Mammary epithelial cell (primary cell): ENCODE measurements at regions of chr3 and their contacts with region 1.

Region 1: DNA sequence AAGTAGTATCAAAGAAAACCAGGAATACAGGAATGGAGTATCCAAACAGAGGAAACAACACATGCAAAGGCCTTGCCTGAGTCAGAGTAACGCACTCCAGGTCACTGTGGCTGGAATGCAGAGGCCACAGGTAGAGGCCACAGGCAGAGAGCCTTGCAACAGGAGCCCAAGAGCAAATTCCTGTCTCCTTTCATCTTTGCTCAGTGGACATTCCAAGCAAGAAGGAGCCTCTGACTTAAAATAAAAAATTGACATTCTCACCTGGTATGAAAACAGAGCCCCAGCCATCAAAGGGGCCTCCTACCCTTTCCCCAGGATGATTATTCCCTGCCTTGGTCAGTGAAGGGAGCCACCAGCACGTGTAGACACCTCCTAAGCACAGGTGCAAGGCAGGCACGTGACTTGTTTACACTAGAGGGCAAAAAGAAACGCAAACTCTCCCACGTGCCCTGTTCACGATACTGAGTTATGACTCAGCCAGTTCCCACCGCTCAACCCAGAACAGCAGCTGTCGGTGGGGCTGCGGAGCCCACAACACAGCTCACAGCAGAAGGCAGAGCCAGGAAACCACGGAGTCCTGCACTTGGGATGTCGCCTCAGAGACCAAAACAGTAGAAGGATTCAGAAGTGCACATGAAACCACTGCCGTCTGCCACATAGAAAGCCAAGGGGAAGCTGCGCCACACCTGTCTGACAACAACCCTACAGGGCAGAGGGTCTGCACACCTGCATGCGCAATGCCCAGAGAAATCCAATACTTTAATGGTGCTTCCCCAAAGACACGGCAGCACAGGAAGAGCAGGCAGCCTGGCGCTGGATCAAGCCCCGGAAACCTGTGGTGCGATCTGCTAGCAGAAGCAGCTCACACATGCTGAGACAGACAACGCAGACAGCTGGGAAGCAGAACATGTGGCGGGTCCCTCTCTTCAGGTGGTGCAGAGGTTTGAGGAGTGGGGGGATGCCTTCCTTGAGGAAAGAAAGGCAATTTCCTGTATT is 52.1 kb downstream of the ITGB5 start:
- DNase-seq: peak; percentile 79
- H3K4me3 ChIP-seq: no peak overlapping the region
- H3K27ac ChIP-seq: peak overlapping the region; percentile 16
- H3K4me1 ChIP-seq: peaks cover 50% of the 10 kb centered on the region
- H3K27me3 ChIP-seq: no peaks in the 10 kb centered on the region
- CTCF ChIP-seq: no peak

Region 2: GRCh38 chr3:124878561-124879336 is 43.7 kb after region 1 on chr3:
- CTCF ChIA-PET with region 1: no interaction called
- dilution Hi-C with region 1: loop called (anchors 5 kb)
- in situ Hi-C with region 1: no loop called
- intact Hi-C with region 1: no loop called
- DNase-seq: peak; percentile 94
- H3K4me3 ChIP-seq: peak overlapping the region in 1 of 3 experiments; percentile 5
- H3K27ac ChIP-seq: peak overlapping the region; percentile 68
- H3K4me1 ChIP-seq: peaks cover 60% of the 10 kb centered on the region
- H3K27me3 ChIP-seq: no peaks in the 10 kb centered on the region
- CTCF ChIP-seq: no peak

Region 3: DNA sequence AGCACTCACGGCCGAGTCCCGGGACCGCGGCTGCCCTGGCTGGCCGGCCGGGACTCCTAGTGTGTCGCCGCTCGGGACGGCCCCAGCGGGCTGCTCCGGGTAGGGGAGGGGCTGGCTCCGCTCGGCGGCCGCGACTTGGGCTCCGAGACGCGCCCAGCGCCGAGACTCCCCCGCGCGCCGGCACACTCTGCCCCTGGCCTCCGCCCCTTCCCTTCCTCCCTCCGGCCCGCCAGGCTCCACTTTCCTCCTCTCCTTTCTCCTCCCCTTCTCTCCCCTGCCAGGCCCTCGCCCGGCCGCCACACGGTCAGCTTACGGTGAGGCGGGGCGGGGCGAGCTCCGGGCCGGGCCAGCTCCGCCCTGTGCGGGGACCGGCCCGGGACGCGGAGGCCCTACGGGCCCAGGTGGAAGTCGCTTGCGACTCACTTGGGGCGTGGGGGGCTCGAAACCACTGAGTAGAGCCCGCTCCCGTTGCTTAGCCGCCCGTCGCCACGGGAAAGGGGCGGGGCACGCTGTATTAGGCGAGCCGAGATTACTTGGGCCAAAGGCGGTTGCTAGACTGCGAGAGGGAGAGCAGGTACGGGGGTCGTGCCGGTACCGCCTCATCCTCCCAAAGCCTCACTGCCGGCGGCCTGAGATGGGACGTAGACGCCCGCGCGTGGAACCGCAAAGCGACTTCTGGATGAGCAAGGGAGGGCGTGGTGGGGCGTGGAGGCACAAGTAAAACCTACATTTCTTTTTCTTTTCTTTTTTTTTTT is 52.3 kb after region 1 on chr3 and contains the start of gene ITGB5:
- CTCF ChIA-PET with region 1: no interaction called
- dilution Hi-C with region 1: no loop called
- in situ Hi-C with region 1: no loop called
- intact Hi-C with region 1: loop called (anchors 2 kb)
- DNase-seq: peak; percentile 80
- H3K4me3 ChIP-seq: peak within 1 kb of the TSS; percentile 64 to 85 (median 80)
- H3K27ac ChIP-seq: peak within 1 kb of the TSS; percentile 76
- H3K4me1 ChIP-seq: peaks cover 62% of the 10 kb centered on the region
- H3K27me3 ChIP-seq: no peaks in the 10 kb centered on the region
- CTCF ChIP-seq: no peak
- total RNA-seq, gene ITGB5: 110 to 172 TPM